Activated naive CD8-positive, alpha-beta T cell treated with anti-CD3 and anti-CD28 coated beads, Interleukin-2, amount 10 ng/mL, durations not matched to agents 7 days and 5 days (primary cell): ENCODE measurements at regions of chr15 and their contacts with region 1.

Region 1: GRCh38 chr15:79970624-79971434 is at the start of gene BCL2A1:
- DNase-seq: peak; percentile 48
- ATAC-seq: peak; percentile 75
- H3K4me3 Mint-ChIP-seq: peak within 1 kb of the TSS; percentile 95
- H3K27ac Mint-ChIP-seq: peak within 1 kb of the TSS; percentile 96
- H3K4me1 Mint-ChIP-seq: peaks cover 44% of the 10 kb centered on the region
- H3K27me3 Mint-ChIP-seq: no peaks in the 10 kb centered on the region
- total RNA-seq, gene BCL2A1: 33.6 to 34.6 TPM

Region 2: DNA sequence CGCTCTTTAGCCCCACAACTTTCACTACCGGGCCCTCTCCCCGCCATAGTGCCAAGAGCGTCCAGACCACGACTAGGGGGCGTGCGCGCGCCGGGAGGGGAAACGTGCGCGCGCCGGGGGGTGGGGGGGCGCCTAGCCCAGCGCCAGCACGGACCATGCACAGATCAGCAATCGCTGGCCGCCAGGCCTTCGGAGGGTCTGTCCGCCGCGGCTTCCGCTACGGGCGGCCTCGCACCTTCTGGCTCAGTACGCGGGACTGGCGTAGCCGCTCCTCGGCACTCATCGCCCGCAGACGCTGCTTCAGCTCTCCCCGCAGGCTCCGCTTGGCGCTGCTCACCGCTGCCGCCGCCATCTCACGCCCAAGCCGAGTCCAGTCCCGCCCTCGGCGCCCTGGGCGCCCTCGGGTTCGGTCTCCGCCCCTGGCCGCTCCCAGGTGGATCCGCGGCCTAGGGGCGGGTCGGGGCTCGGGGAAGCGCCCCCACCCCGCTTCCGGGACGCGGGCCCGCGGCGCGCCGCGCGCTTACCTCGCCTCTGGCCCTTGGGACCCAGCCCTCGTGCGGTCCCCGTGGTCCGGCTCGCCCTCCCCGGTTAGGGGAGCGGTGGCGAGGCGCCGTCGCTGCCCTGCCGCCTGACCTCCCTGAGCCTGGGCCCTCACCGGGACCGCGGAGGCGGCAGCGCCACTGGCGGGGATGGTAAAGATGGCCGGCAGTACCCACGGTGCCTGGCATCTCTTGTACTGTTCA is 74.0 kb before region 1 on chr15 and contains the start of gene MTHFS:
- POLR2A ChIA-PET with region 1: interaction called, 62 read pairs
- DNase-seq: peak; percentile 85
- ATAC-seq: peak; percentile 87
- H3K4me3 Mint-ChIP-seq: peak within 1 kb of the TSS; percentile 95
- H3K27ac Mint-ChIP-seq: peak within 1 kb of the TSS; percentile 96
- H3K4me1 Mint-ChIP-seq: peaks cover 25% of the 10 kb centered on the region
- H3K27me3 Mint-ChIP-seq: no peaks in the 10 kb centered on the region
- total RNA-seq, gene MTHFS: 31.5 to 32.0 TPM

Region 3: GRCh38 chr15:79938143-79938542 is 32.7 kb before region 1 on chr15:
- POLR2A ChIA-PET with region 1: no interaction called
- DNase-seq: no peak
- ATAC-seq: no peak
- H3K4me3 Mint-ChIP-seq: no peak overlapping the region
- H3K27ac Mint-ChIP-seq: no peak overlapping the region
- H3K4me1 Mint-ChIP-seq: peaks cover 8% of the 10 kb centered on the region
- H3K27me3 Mint-ChIP-seq: peaks cover 2% of the 10 kb centered on the region

Region 4: GRCh38 chr15:79948095-79948695 is 22.6 kb before region 1 on chr15:
- POLR2A ChIA-PET with region 1: interaction called, 12 read pairs
- DNase-seq: no peak
- ATAC-seq: peak; percentile 45
- H3K4me3 Mint-ChIP-seq: no peak overlapping the region
- H3K27ac Mint-ChIP-seq: no peak overlapping the region
- H3K4me1 Mint-ChIP-seq: peaks cover 11% of the 10 kb centered on the region
- H3K27me3 Mint-ChIP-seq: no peaks in the 10 kb centered on the region